ENCODE measurements at regions of chr4 and their contacts with region 1.

Region 1: DNA sequence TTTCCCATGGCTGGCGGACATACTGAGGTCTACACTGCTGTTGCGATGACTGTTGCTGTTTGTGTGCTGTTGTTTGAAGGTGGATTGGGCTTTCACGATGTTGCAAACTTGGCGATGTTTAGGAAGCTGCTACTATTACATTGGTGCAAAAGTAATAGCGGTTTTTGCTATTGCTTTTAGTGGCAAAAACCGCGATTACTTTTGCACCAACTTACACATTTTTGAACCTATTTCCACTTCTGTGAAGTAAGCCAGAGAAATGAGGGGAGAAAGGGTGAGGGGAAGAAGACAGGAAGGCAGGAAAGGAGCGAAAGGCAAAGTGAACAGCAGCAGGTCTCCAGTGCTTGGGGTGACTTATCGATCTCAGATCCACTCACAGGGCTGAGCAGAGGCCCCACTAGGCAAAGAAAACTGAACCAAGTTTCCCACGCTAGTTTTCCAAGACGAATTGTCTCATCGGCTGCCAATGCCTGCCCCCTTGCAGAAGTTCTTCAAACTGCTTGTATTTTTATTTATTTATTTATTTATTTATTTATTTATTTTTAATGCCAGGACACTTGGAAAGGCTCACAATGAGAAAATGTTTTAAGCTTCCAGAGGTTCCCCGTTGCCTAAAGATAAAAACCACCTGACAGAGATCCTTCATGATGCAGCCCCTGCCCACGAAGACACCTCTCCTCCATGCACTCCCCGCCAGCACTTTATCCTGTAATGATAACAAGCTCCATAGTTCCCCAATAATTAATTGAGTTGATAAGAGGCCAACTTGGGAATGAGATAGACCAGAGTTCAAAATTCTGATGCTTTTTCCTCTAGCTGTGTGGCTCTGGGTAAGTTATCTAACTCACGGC is 43.3 kb downstream of the QDPR start:
- DNase-seq: peak; percentile 44
- ATAC-seq: no peak
- H3K4me3 ChIP-seq: no peak overlapping the region
- H3K27ac ChIP-seq: no peak overlapping the region
- H3K4me1 ChIP-seq: peaks cover 2% of the 10 kb centered on the region; the same call in 1 of the 2 replicates
- H3K27me3 ChIP-seq: peaks cover 2% of the 10 kb centered on the region; the same call in 1 of the 2 replicates
- CTCF ChIP-seq: peak; percentile 46; the same call in 1 of the 2 replicates
- POLR2A ChIP-seq: no peak
- RAD21 ChIP-seq: peak; percentile 48

Region 2: GRCh38 chr4:15778289-15779241 is 1690.0 kb before region 1 on chr4 and contains the start of gene CD38:
- CTCF ChIA-PET with region 1: no interaction called
- POLR2A ChIA-PET with region 1: no interaction called
- dilution Hi-C with region 1: no loop called
- in situ Hi-C with region 1: no loop called
- intact Hi-C with region 1: no loop called
- DNase-seq: no peak
- ATAC-seq: peak; percentile 46
- H3K4me3 ChIP-seq: peak within 1 kb of the TSS; percentile 30
- H3K27ac ChIP-seq: no peak within 1 kb of the TSS
- H3K4me1 ChIP-seq: no peaks in the 10 kb centered on the region; the same call in 1 of the 2 replicates
- H3K27me3 ChIP-seq: peaks cover 54% of the 10 kb centered on the region
- CTCF ChIP-seq: no peak
- POLR2A ChIP-seq: no peak
- RAD21 ChIP-seq: no peak
- total RNA-seq, gene CD38: not detected in 2 replicates

Region 3: DNA sequence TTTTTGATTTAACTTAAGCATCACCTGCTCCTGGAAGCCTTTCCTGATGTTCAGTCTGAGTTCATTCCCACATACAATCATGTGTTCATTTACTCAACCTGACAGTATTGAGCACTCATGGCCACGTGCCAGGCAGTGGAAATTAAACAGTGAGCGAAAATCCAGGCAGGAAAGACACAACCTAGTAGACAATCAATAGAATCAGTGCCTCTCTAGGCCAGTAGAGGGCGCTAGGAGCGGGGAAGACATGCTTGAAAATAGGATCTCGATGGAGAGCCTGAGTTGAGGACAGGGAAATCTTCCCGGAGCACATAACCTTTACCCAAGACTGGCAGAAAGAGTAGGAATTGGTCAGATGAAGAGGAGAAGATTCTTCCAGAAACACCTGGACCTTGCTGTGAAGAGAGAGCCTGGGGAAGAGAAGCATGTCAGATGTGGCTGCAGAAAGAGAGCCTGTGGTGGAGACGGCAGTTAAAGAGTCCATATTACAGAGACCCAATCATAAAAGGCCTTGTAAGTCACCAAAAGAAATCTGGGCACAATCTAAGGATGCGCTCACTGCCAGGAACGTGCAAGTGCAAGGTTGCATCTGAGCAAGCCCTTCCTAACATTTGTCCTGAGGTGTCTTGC is 673.7 kb before region 1 on chr4:
- CTCF ChIA-PET with region 1: no interaction called
- POLR2A ChIA-PET with region 1: no interaction called
- dilution Hi-C with region 1: no loop called
- in situ Hi-C with region 1: loop called (anchors 25 kb)
- intact Hi-C with region 1: no loop called
- DNase-seq: peak; percentile 60
- ATAC-seq: peak; percentile 80
- H3K4me3 ChIP-seq: no peak overlapping the region
- H3K27ac ChIP-seq: no peak overlapping the region
- H3K4me1 ChIP-seq: no peaks in the 10 kb centered on the region
- H3K27me3 ChIP-seq: no peaks in the 10 kb centered on the region
- CTCF ChIP-seq: peak; percentile 84
- POLR2A ChIP-seq: no peak
- RAD21 ChIP-seq: peak; percentile 91

Region 4: DNA sequence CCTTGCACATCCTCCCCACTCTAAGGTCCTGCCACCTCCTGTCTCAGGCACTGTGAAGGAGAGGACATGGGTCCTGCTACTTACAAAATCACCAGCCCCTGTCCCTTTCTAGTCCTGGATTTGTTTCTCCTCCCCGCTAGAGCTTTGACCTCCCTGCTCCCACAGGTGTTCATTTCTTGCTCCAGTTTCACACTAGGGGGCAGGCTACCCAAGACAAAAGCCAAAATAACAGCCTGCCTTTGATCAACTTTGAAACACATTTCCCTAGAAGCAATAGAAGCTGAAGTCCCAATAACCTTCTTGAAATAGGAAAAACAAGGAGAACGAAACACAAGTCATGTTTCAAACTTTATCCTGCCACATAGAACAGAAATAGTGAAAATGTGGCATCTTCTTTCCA is 121.2 kb before region 1 on chr4:
- CTCF ChIA-PET with region 1: interaction called, 5 read pairs
- POLR2A ChIA-PET with region 1: no interaction called
- dilution Hi-C with region 1: no loop called
- in situ Hi-C with region 1: no loop called
- intact Hi-C with region 1: loop called (anchors 1 kb)
- DNase-seq: peak; percentile 19
- ATAC-seq: peak; percentile 53
- H3K4me3 ChIP-seq: no peak overlapping the region
- H3K27ac ChIP-seq: no peak overlapping the region
- H3K4me1 ChIP-seq: no peaks in the 10 kb centered on the region
- H3K27me3 ChIP-seq: peaks cover 2% of the 10 kb centered on the region; the same call in 1 of the 2 replicates
- CTCF ChIP-seq: peak; percentile 53
- POLR2A ChIP-seq: no peak
- RAD21 ChIP-seq: peak; percentile 53

Region 5: DNA sequence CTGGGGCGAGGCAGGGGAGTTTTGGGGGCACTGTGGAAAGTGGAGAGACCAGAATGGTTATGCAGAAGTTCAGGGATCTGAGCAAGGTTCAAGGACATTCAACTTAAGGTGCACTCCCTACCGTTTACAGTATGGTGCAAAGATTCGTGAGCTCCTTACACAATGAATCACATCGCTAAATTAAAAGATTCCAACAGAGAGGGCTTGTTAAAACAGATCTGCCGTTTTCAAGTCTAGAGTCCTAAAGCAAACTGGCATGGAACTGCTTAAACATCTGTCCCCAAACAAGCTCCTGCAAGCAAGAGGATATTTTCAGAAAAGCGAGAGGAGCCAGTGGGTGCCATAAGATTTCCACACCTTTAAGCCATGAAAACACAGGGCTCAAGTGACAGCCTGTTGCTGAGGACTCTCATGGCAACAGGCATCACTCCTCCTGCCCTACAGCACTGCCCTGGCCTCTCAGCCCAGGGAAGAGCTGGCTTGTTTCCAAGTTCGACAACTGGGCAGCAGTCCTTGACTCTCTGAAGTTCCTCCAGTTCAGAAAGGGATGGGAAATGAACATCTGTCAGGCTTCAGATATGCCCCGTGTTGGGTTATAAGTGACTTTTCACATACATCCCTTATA is 302.8 kb after region 1 on chr4:
- CTCF ChIA-PET with region 1: no interaction called
- POLR2A ChIA-PET with region 1: no interaction called
- dilution Hi-C with region 1: no loop called
- in situ Hi-C with region 1: no loop called
- intact Hi-C with region 1: no loop called
- DNase-seq: no peak
- ATAC-seq: no peak
- H3K4me3 ChIP-seq: no peak overlapping the region
- H3K27ac ChIP-seq: no peak overlapping the region
- H3K4me1 ChIP-seq: no peaks in the 10 kb centered on the region
- H3K27me3 ChIP-seq: peaks cover 1% of the 10 kb centered on the region; the same call in 1 of the 2 replicates
- CTCF ChIP-seq: no peak
- POLR2A ChIP-seq: no peak
- RAD21 ChIP-seq: no peak